B cell (primary cell): ENCODE measurements at regions of chr17 and their contacts with region 1.

Region 1: GRCh38 chr17:64920026-64920418 is 744 bp upstream of the LRRC37A3 start:
- DNase-seq: no peak
- ATAC-seq: no peak
- H3K4me3 ChIP-seq: peak overlapping the region in 4 of 5 experiments; percentile 58 to 85 (median 66)
- H3K4me3 Mint-ChIP-seq: peak overlapping the region; percentile 96
- H3K27ac ChIP-seq: peak overlapping the region; percentile 84 to 90
- H3K27ac Mint-ChIP-seq: peak overlapping the region; percentile 99
- H3K4me1 ChIP-seq: peaks cover 21 to 26% of the 10 kb centered on the region in 2 donors
- H3K4me1 Mint-ChIP-seq: peaks cover 39% of the 10 kb centered on the region
- H3K27me3 ChIP-seq: no peaks in the 10 kb centered on the region
- H3K27me3 Mint-ChIP-seq: no peaks in the 10 kb centered on the region
- CTCF ChIP-seq: no peak

Region 2: GRCh38 chr17:64778240-64779097 is 141.6 kb before region 1 on chr17:
- CTCF ChIA-PET with region 1: no interaction called
- POLR2A ChIA-PET with region 1: interaction called, 4 read pairs
- intact Hi-C with region 1: loop called (anchors 5 kb)
- DNase-seq: peak; percentile 61
- ATAC-seq: peak; percentile 14
- H3K4me3 ChIP-seq: peak overlapping the region; percentile 12 to 55 (median 51)
- H3K4me3 Mint-ChIP-seq: peak overlapping the region; percentile 94
- H3K27ac ChIP-seq: no peak overlapping the region
- H3K27ac Mint-ChIP-seq: peak overlapping the region; percentile 76
- H3K4me1 ChIP-seq: peaks cover 37 to 56% of the 10 kb centered on the region in 2 donors
- H3K4me1 Mint-ChIP-seq: peaks cover 45% of the 10 kb centered on the region
- H3K27me3 ChIP-seq: peaks cover 0 to 32% (median 10%) of the 10 kb centered on the region in 4 experiments
- H3K27me3 Mint-ChIP-seq: peaks cover 3% of the 10 kb centered on the region
- CTCF ChIP-seq: no peak

Region 3: GRCh38 chr17:64968652-64969501 is 48.9 kb after region 1 on chr17:
- CTCF ChIA-PET with region 1: interaction called, 4 read pairs
- POLR2A ChIA-PET with region 1: interaction called, 3 read pairs
- intact Hi-C with region 1: loop called (anchors 10 kb)
- DNase-seq: peak; percentile 37
- ATAC-seq: no peak
- H3K4me3 ChIP-seq: no peak overlapping the region
- H3K4me3 Mint-ChIP-seq: peak overlapping the region; percentile 65
- H3K27ac ChIP-seq: peak overlapping the region; percentile 2 to 73
- H3K27ac Mint-ChIP-seq: peak overlapping the region; percentile 81
- H3K4me1 ChIP-seq: peaks cover 59 to 66% of the 10 kb centered on the region in 2 donors
- H3K4me1 Mint-ChIP-seq: peaks cover 80% of the 10 kb centered on the region
- H3K27me3 ChIP-seq: no peaks in the 10 kb centered on the region
- H3K27me3 Mint-ChIP-seq: no peaks in the 10 kb centered on the region
- CTCF ChIP-seq: no peak

Region 4: GRCh38 chr17:64992325-64992811 is 72.3 kb after region 1 on chr17:
- CTCF ChIA-PET with region 1: no interaction called
- POLR2A ChIA-PET with region 1: no interaction called
- intact Hi-C with region 1: no loop called
- DNase-seq: no peak
- ATAC-seq: no peak
- H3K4me3 ChIP-seq: no peak overlapping the region
- H3K4me3 Mint-ChIP-seq: no peak overlapping the region
- H3K27ac ChIP-seq: no peak overlapping the region
- H3K27ac Mint-ChIP-seq: no peak overlapping the region
- H3K4me1 ChIP-seq: peaks cover 6 to 13% of the 10 kb centered on the region in 2 donors
- H3K4me1 Mint-ChIP-seq: peaks cover 18% of the 10 kb centered on the region
- H3K27me3 ChIP-seq: no peaks in the 10 kb centered on the region
- H3K27me3 Mint-ChIP-seq: no peaks in the 10 kb centered on the region
- CTCF ChIP-seq: no peak

Region 5: DNA sequence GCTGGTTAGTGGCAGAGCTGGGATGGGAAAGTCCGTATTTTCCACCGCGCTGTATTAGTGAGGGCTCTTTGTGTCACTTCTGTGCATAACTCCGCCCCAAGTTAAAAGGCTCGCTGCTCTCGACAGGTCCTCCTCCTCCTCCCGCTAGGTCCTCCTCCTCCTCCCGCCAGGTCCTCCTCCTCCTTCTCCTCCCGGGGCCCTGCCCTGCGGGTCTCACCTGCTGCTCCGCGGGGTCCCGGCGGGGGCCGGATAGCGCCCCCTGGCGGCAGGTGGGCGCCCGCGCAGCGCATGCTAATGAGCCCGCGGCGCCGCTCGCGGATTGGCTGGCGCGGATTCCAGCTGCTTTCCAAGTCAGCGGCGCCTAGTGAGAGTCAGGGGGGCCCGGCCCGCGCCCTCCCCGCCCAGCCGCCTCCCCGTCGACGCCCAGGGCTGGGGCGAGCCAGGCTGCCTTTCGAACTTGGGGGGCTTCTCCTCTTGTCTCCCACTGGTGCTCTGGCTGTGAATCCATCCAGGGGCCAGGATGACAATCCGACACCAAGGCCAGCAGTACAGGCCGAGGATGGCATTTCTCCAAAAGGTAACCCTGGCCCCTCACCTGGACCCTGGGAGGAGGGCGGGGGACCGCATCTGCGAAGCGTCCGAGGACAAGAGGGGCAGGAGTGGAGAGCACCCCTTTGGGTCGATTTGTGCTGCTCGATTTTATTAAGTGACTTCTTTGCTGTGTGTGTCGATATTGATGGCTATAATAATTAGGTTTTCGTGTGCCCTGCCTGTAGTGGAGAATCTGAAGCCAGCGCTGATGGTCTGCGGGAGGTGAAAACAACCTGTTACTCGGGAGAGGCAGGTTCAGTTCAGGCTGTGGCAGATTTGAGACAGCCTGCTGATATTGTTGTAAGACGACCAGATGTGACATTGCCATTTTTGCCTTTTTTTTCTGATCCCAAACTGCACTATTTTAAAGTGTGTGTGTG is 217.3 kb after region 1 on chr17 and contains the start of gene RGS9:
- CTCF ChIA-PET with region 1: interaction called, 5 read pairs
- POLR2A ChIA-PET with region 1: no interaction called
- intact Hi-C with region 1: loop called (anchors 5 kb)
- DNase-seq: peak; percentile 89
- ATAC-seq: peak; percentile 98
- H3K4me3 ChIP-seq: peak within 1 kb of the TSS in 4 of 5 experiments; percentile 32 to 55 (median 49)
- H3K4me3 Mint-ChIP-seq: peak within 1 kb of the TSS; percentile 86
- H3K27ac ChIP-seq: no peak within 1 kb of the TSS
- H3K27ac Mint-ChIP-seq: peak within 1 kb of the TSS; percentile 32
- H3K4me1 ChIP-seq: peaks cover 11 to 13% of the 10 kb centered on the region in 2 donors
- H3K4me1 Mint-ChIP-seq: peaks cover 18% of the 10 kb centered on the region
- H3K27me3 ChIP-seq: peaks cover 0 to 13% (median 8%) of the 10 kb centered on the region in 4 experiments
- H3K27me3 Mint-ChIP-seq: peaks cover 18% of the 10 kb centered on the region
- CTCF ChIP-seq: peak; percentile 85
- total RNA-seq, gene RGS9: 3.4 and 4.4 TPM in 2 replicates

Region 6: GRCh38 chr17:65332375-65332774 is 412.4 kb after region 1 on chr17:
- CTCF ChIA-PET with region 1: no interaction called
- POLR2A ChIA-PET with region 1: no interaction called
- intact Hi-C with region 1: no loop called
- DNase-seq: no peak
- ATAC-seq: no peak
- H3K4me3 ChIP-seq: no peak overlapping the region
- H3K4me3 Mint-ChIP-seq: no peak overlapping the region
- H3K27ac ChIP-seq: no peak overlapping the region
- H3K27ac Mint-ChIP-seq: no peak overlapping the region
- H3K4me1 ChIP-seq: no peaks in the 10 kb centered on the region
- H3K4me1 Mint-ChIP-seq: no peaks in the 10 kb centered on the region
- H3K27me3 ChIP-seq: peaks cover 0 to 8% (median 1%) of the 10 kb centered on the region in 4 experiments
- H3K27me3 Mint-ChIP-seq: peaks cover 35% of the 10 kb centered on the region
- CTCF ChIP-seq: no peak